Common myeloid progenitor, CD34-positive (primary cell): ENCODE measurements at regions of chr1 and their contacts with region 1.

Region 1: GRCh38 chr1:150621497-150622302 is 7.7 kb downstream of the ENSA start:
- DNase-seq: peak; percentile 71 to 84 (median 81)
- H3K4me3 ChIP-seq: peak overlapping the region in 2 of 7 experiments; percentile 30 to 38
- H3K27ac ChIP-seq: peak overlapping the region; percentile 19 to 67
- H3K4me1 ChIP-seq: peaks cover 15 to 41% (median 25%) of the 10 kb centered on the region in 4 experiments
- H3K27me3 ChIP-seq: no peaks in the 10 kb centered on the region

Region 2: DNA sequence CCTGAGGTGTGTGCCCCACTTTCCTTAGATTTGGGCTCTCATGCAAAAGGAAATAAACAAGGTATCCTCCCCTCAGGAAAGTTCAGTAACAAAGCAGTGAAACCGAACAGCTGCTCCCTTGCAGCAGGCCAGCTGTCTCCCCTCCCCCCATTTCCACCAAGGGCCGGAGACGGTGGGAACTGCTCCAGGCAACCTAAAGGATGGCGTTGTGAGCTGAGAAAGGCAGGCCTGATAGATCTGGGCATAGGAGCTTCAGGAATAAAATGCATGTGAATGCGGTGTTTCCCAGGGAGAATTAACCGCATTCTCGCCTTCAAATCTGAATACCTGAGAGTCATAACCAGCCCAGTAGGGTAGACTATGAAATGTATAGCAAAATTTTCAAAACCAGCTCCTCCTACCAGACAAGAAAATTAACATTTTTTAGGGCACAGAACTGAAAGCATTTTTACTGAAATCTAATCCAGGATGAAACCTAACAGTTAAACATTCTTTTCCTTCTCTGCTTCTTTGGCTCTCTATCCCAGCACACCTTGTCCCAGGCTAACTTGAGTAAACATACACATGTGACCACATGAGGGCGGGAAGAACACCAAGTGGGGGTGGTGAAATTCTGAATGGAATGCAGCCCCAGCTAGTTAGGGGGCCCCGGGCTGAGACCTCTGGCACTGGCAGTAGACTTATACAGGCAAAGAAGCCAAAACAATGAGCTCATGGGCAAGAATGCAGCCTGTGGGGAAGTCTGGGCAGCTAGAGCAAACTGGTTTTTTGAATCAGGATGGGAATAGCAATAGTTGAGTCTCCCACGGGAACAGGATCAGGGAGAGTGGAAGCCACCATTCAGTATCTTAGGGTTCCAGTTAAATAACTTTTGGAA is 53.7 kb before region 1 on chr1:
- CTCF ChIA-PET with region 1: interaction called, 152 read pairs
- POLR2A ChIA-PET with region 1: interaction called, 5 read pairs
- DNase-seq: peak in 2 of 3 donors; percentile 30 to 56
- H3K4me3 ChIP-seq: peak overlapping the region in 6 of 7 experiments; percentile 45 to 74 (median 60)
- H3K27ac ChIP-seq: peak overlapping the region; percentile 25 to 75
- H3K4me1 ChIP-seq: peaks cover 35 to 69% (median 66%) of the 10 kb centered on the region in 4 experiments
- H3K27me3 ChIP-seq: no peaks in the 10 kb centered on the region

Region 3: GRCh38 chr1:150674881-150675280 is 53.2 kb after region 1 on chr1:
- CTCF ChIA-PET with region 1: no interaction called
- POLR2A ChIA-PET with region 1: no interaction called
- DNase-seq: no peak
- H3K4me3 ChIP-seq: no peak overlapping the region
- H3K27ac ChIP-seq: no peak overlapping the region
- H3K4me1 ChIP-seq: no peaks in the 10 kb centered on the region
- H3K27me3 ChIP-seq: no peaks in the 10 kb centered on the region